MCF 10A (cell line): ENCODE measurements at regions of chr9 and their contacts with region 1.

Region 1: DNA sequence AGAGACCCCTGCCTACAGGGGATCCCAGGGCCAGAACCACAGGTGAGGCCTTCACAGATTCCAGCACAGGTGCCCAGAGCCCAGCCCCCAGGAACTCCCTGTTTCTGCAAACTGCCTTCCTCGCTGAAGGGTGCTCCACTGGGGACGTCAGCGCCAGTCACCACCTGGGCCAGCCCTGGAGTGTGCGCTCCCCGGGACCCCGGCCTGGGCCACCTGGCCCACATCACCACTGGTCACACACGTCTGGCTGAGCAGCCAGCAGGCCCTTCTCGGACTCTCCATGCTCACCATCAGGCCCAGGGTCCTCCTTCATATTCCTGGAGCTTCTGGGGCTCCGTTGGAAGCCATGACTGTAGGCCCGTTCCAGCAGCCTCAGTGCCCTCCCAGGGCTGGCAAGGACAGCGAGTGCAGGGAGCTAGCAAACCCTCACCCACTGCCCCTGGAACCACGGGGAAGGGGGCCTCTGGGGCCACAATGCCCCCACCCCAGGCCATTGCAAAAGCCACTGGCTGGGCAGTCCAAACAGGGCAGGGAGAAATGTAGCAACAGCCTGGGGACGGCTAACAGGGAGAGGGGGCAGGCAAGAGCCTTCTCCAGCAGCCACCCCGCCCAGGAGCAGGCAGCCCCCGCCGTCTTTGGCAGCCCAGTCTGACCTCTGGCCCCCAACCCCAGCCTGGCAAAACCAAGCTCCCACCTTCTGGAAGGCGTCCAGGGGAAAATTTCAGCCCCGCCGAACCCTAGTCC is 1.3 kb downstream of the AGPAT2 start:
- DNase-seq: no peak
- H3K4me3 Mint-ChIP-seq: peak overlapping the region; percentile 68
- H3K27ac Mint-ChIP-seq: no peak overlapping the region
- H3K4me1 Mint-ChIP-seq: peaks cover 2% of the 10 kb centered on the region
- H3K27me3 Mint-ChIP-seq: no peaks in the 10 kb centered on the region
- CTCF ChIP-seq: no peak

Region 2: GRCh38 chr9:136625101-136626060 is 60.6 kb before region 1 on chr9:
- CTCF ChIA-PET with region 1: no interaction called
- POLR2A ChIA-PET with region 1: no interaction called
- intact Hi-C with region 1: no loop called
- DNase-seq: peak; percentile 84
- H3K4me3 Mint-ChIP-seq: no peak overlapping the region
- H3K27ac Mint-ChIP-seq: peak overlapping the region; percentile 17
- H3K4me1 Mint-ChIP-seq: peaks cover 12% of the 10 kb centered on the region
- H3K27me3 Mint-ChIP-seq: no peaks in the 10 kb centered on the region
- CTCF ChIP-seq: peak; percentile 56

Region 3: DNA sequence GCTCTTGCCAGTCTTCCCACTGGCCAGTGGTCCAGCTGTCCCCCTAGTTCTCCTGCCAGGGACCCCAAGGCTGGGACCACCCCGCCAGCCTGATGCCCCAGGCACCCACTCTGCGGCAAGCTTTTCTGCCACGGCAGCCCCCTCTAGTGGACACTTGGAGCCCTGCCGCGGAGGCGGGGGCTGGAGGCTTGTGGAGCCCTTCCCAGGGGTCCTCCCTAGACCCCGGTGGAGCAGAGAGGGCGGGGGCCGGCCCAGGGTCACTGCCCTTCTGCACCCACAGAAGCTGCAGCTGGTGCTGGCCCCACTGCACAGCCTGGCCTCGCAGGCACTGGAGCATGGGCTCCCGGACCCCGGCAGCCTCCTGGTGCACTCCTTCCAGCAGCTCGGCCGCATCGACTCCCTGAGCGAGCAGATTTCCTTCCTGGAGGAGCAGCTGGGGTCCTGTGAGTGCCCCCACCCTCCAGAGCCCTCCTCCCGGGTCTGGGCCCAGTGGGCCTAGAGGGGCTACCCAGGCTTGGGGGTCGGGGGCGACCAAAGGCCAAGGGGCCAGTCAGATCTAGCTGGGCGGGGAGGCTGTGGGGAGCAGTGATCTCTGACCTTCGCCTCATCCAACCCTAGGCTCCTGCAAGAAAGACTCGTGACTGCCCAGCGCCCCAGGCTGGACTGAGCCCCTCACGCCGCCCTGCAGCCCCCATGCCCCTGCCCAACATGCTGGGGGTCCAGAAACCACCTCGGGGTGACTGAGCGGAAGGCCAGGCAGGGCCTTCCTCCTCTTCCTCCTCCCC is 14.1 kb before region 1 on chr9:
- CTCF ChIA-PET with region 1: interaction called, 22 read pairs
- POLR2A ChIA-PET with region 1: interaction called, 3 read pairs
- intact Hi-C with region 1: no loop called
- DNase-seq: peak; percentile 28
- H3K4me3 Mint-ChIP-seq: no peak overlapping the region
- H3K27ac Mint-ChIP-seq: no peak overlapping the region
- H3K4me1 Mint-ChIP-seq: no peaks in the 10 kb centered on the region
- H3K27me3 Mint-ChIP-seq: no peaks in the 10 kb centered on the region
- CTCF ChIP-seq: peak; percentile 85

Region 4: GRCh38 chr9:136885950-136886578 is 200.1 kb after region 1 on chr9 and contains the start of gene TRAF2:
- CTCF ChIA-PET with region 1: no interaction called
- POLR2A ChIA-PET with region 1: no interaction called
- intact Hi-C with region 1: no loop called
- DNase-seq: peak; percentile 97
- H3K4me3 Mint-ChIP-seq: peak within 1 kb of the TSS; percentile 84
- H3K27ac Mint-ChIP-seq: peak within 1 kb of the TSS; percentile 71
- H3K4me1 Mint-ChIP-seq: peaks cover 6% of the 10 kb centered on the region
- H3K27me3 Mint-ChIP-seq: no peaks in the 10 kb centered on the region
- CTCF ChIP-seq: no peak
- total RNA-seq, gene TRAF2: 10.7 and 14.1 TPM in 2 replicates